PC-9 (cell line): ENCODE measurements at regions of chr1 and their contacts with region 1.

Region 1: DNA sequence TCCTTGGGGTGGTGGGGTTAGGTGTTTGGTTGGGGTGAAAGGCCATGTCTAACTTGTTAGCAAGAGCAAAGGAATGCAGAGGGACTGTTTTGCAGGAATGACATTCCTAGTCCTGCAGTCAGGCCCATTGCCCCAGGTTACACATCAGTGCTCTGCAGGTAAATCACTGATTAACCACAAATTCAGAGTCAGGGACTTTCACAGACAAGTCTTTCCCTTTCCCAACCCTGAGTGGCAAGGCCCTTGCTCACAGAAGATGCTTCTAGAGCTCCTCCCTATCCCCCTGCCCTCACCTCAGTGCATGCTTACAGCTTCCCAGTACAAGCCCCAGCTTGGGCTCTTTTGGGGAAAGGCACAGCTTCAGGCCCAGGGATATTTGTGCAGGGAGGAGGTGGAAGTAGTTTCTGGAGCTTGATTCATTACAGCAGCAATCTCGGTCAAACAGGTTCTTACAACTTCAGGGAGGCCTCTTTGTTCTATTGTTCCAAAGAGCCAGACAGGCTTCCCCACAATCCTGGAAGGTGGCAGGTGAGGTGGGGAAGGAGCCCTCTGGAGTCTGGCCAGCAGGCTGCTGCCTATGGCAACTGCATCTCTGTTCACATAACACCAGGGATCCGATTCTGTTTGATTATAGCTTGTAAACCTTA is 53.9 kb downstream of the CASQ2 start:
- DNase-seq: peak; percentile 93 to 100
- H3K4me3 ChIP-seq: peak overlapping the region; percentile 26; the same call in 1 of the 2 replicates
- H3K27ac ChIP-seq: peak overlapping the region; percentile 94
- H3K4me1 ChIP-seq: peaks cover 64% of the 10 kb centered on the region
- H3K27me3 ChIP-seq: no peaks in the 10 kb centered on the region
- CTCF ChIP-seq: no peak; the same call in 1 of the 2 replicates

Region 2: DNA sequence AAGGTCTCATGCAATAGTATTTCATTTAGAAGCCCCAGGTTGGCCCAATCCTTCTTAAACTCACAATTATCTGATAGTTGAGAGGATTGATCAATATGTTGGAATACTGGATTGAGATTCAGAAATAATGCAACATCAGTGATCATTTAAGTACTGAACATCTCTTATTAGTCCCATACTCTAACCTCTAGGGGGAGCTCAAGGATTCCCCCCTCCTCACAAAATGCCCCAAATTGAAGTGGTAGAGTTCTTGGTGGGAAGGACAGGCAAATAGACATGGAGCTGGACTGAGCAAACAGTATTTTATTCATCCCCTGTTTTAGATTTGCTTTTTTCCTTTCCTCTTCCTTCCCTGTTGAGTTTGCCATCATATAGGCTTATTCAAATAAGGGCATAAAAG is 439.4 kb before region 1 on chr1:
- CTCF ChIA-PET with region 1: no interaction called
- POLR2A ChIA-PET with region 1: no interaction called
- intact Hi-C with region 1: no loop called
- DNase-seq: no peak
- H3K4me3 ChIP-seq: no peak overlapping the region
- H3K27ac ChIP-seq: no peak overlapping the region
- H3K4me1 ChIP-seq: no peaks in the 10 kb centered on the region
- H3K27me3 ChIP-seq: no peaks in the 10 kb centered on the region
- CTCF ChIP-seq: peak; percentile 74

Region 3: DNA sequence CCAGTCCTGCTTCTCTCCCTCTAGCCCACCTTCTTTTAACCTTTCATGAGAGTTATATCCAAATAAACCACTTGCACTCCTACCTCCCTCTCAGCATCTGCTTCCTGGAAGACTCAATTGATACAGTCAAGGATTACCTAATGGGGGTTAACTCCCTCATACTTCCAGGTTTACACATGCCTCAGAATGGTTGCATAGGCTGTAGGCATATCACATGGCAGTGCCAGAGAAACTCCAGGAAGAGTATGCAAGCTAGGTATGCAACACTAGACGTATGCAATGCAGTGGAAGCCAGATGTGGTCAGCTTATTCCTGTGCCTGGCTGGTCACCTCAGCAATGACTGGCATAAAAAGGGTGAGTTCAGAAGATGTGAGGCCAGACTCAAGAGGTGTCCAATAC is 105.6 kb before region 1 on chr1:
- CTCF ChIA-PET with region 1: interaction called, 3 read pairs
- POLR2A ChIA-PET with region 1: no interaction called
- intact Hi-C with region 1: loop called (anchors 5 kb)
- DNase-seq: peak in 1 of 2 experiments; percentile 73
- H3K4me3 ChIP-seq: no peak overlapping the region
- H3K27ac ChIP-seq: no peak overlapping the region
- H3K4me1 ChIP-seq: peaks cover 17% of the 10 kb centered on the region
- H3K27me3 ChIP-seq: no peaks in the 10 kb centered on the region
- CTCF ChIP-seq: no peak

Region 4: DNA sequence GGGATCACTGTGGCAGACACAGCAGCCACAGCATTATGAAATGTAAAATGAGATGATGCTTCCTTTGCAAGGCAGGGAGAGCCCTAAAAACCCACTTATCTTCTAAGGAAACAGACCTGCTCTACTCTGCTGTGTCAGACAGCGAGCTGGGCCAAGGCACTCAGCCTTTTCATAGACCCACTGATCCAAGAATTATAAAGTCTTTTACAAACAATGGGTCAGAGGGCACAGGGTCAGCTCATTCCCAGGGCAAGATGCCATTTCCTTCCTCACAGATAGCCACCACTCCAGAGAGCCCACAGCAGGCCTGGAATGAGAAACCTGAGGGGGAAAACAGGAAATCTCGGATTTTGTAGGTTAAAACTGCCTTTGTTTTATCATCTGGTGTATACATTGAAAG is 10.9 kb after region 1 on chr1:
- CTCF ChIA-PET with region 1: interaction called, 10 read pairs
- POLR2A ChIA-PET with region 1: interaction called, 3 read pairs
- intact Hi-C with region 1: no loop called
- DNase-seq: no peak
- H3K4me3 ChIP-seq: no peak overlapping the region
- H3K27ac ChIP-seq: no peak overlapping the region
- H3K4me1 ChIP-seq: peaks cover 21% of the 10 kb centered on the region
- H3K27me3 ChIP-seq: no peaks in the 10 kb centered on the region
- CTCF ChIP-seq: no peak

Region 5: DNA sequence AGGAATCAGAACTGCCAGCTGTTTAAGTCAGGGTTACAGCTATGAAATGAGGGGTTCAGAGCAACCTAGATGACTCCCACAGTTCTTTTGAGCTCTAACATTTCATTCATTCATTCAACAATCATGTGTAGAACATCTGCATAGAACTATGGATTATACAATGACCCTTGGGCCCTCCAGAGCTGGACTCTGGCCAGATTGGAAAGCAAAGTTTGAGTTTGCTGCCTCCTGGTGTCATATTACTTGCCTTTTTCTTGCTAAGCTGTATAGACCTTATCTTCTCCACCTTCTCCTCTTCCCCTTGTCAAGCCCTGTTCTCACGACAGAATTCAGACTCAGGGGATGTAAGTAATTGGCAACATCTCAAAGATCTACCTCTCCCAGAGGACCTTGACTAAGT is 49.9 kb after region 1 on chr1:
- CTCF ChIA-PET with region 1: interaction called, 12 read pairs
- POLR2A ChIA-PET with region 1: no interaction called
- intact Hi-C with region 1: loop called (anchors 2 kb)
- DNase-seq: peak; percentile 43 to 70
- H3K4me3 ChIP-seq: no peak overlapping the region
- H3K27ac ChIP-seq: no peak overlapping the region
- H3K4me1 ChIP-seq: peaks cover 19% of the 10 kb centered on the region
- H3K27me3 ChIP-seq: no peaks in the 10 kb centered on the region
- CTCF ChIP-seq: peak; percentile 85

Region 6: GRCh38 chr1:116019653-116020253 is 305.1 kb after region 1 on chr1:
- CTCF ChIA-PET with region 1: no interaction called
- POLR2A ChIA-PET with region 1: no interaction called
- intact Hi-C with region 1: no loop called
- DNase-seq: no peak
- H3K4me3 ChIP-seq: no peak overlapping the region
- H3K27ac ChIP-seq: no peak overlapping the region
- H3K4me1 ChIP-seq: no peaks in the 10 kb centered on the region
- H3K27me3 ChIP-seq: no peaks in the 10 kb centered on the region
- CTCF ChIP-seq: no peak